ENCODE measurements at regions of chr9 and their contacts with region 1.

Region 1: GRCh38 chr9:32431940-32432555 is 47.6 kb downstream of the ACO1 start:
- DNase-seq: peak in 1 of 2 donors; percentile 23
- ATAC-seq: peak in 1 of 2 donors; percentile 26
- H3K4me3 ChIP-seq: no peak overlapping the region
- H3K27ac ChIP-seq: no peak overlapping the region
- H3K4me1 ChIP-seq: no peaks in the 10 kb centered on the region
- H3K27me3 ChIP-seq: no peaks in the 10 kb centered on the region
- CTCF ChIP-seq: peak; percentile 25 to 63 (median 40)
- POLR2A ChIP-seq: no peak

Region 2: GRCh38 chr9:32384364-32385151 is 47.5 kb before region 1 on chr9 and contains the start of gene ACO1:
- in situ Hi-C with region 1: loop called in 2 of 4 experiments (anchors 5 kb)
- intact Hi-C with region 1: loop called (anchors 1 kb)
- DNase-seq: peak; percentile 80 to 86
- ATAC-seq: peak; percentile 89 to 93
- H3K4me3 ChIP-seq: peak within 1 kb of the TSS; percentile 67 to 94 (median 80)
- H3K27ac ChIP-seq: peak within 1 kb of the TSS; percentile 88 to 96 (median 90)
- H3K4me1 ChIP-seq: peaks cover 20 to 24% of the 10 kb centered on the region in 2 donors
- H3K27me3 ChIP-seq: no peaks in the 10 kb centered on the region
- CTCF ChIP-seq: peak in 1 of 5 experiments; percentile 12
- POLR2A ChIP-seq: peak; percentile 81 to 86
- total RNA-seq, gene ACO1: 28.3 to 35.0 (median 30.3) TPM

Region 3: DNA sequence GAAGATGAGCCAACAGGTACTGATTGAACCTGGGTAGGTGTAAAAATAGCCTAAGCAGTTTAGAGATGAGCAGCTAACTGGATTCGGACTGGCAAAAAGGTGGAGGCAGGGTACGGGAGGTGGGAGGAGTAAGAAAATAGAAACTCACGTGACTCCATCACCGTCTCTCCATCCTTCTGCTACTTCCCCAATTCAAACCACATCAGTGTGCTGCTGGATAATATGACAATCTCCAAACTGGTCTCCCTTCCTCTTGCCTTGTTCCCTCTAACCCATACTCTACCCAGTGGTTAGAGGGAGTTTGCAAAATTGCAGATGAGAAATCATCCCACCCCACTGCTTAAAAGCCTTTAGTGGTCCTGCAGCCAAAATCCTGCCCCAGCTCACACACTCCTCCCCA is 51.3 kb after region 1 on chr9:
- in situ Hi-C with region 1: no loop called
- intact Hi-C with region 1: loop called (anchors 5 kb)
- DNase-seq: no peak
- ATAC-seq: no peak
- H3K4me3 ChIP-seq: no peak overlapping the region
- H3K27ac ChIP-seq: no peak overlapping the region
- H3K4me1 ChIP-seq: no peaks in the 10 kb centered on the region
- H3K27me3 ChIP-seq: no peaks in the 10 kb centered on the region
- CTCF ChIP-seq: no peak
- POLR2A ChIP-seq: no peak